T-cell (primary cell): ENCODE measurements at regions of chr20 and their contacts with region 1.

Region 1: DNA sequence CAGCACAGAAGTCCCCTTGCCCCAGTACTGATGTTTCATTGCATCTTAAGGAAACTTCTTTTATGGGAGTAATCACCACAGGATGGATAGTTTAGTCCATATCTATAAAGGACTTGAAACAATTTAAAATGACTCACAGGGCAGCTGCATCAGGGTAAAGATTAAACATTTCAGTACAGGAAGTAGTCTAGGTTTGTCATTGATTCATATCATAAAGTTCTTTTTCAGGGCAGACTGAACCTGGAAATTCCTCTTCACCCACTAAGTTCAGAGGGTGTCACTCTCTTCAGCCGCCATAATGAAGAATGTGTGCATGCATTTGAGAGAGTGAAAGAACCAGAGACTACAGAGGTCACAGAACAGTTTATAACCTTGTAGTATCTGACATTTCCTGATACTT is 296.3 kb upstream of the JAG1 start:
- DNase-seq: no peak
- ATAC-seq: no peak
- H3K4me3 ChIP-seq: no peak overlapping the region
- H3K4me3 Mint-ChIP-seq: no peak overlapping the region
- H3K27ac ChIP-seq: no peak overlapping the region
- H3K27ac Mint-ChIP-seq: no peak overlapping the region
- H3K4me1 ChIP-seq: no peaks in the 10 kb centered on the region
- H3K4me1 Mint-ChIP-seq: no peaks in the 10 kb centered on the region
- H3K27me3 ChIP-seq: peaks cover 0 to 3% of the 10 kb centered on the region in 2 experiments
- H3K27me3 Mint-ChIP-seq: no peaks in the 10 kb centered on the region

Region 2: DNA sequence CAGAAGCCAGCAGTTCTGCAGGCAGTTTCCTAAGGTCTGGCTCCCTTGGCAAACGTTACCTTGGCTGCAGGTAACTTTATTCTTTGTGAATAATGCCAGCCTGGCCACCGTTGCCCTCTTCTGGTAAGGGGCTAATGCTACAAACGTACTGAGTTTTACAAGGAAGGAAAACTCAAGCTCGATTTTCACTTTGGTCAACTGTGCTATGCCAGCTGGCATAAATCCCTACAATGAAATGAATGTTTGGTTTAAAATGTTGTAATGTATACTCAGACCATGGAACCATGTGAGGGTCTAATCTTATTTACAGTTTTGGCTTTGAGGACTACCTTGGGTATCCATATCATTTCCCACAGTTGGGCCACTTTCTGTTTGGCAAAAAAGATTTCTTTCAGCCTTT is 433.6 kb before region 1 on chr20:
- CTCF ChIA-PET with region 1: no interaction called
- POLR2A ChIA-PET with region 1: no interaction called
- DNase-seq: peak in 12 of 35 experiments; percentile 4 to 37 (median 9)
- ATAC-seq: peak in 1 of 4 experiments; percentile 51
- H3K4me3 ChIP-seq: no peak overlapping the region
- H3K4me3 Mint-ChIP-seq: no peak overlapping the region
- H3K27ac ChIP-seq: no peak overlapping the region
- H3K27ac Mint-ChIP-seq: no peak overlapping the region
- H3K4me1 ChIP-seq: peaks cover 4 to 9% of the 10 kb centered on the region in 2 experiments
- H3K4me1 Mint-ChIP-seq: peaks cover 14 to 29% (median 20%) of the 10 kb centered on the region in 3 donors
- H3K27me3 ChIP-seq: no peaks in the 10 kb centered on the region
- H3K27me3 Mint-ChIP-seq: no peaks in the 10 kb centered on the region

Region 3: DNA sequence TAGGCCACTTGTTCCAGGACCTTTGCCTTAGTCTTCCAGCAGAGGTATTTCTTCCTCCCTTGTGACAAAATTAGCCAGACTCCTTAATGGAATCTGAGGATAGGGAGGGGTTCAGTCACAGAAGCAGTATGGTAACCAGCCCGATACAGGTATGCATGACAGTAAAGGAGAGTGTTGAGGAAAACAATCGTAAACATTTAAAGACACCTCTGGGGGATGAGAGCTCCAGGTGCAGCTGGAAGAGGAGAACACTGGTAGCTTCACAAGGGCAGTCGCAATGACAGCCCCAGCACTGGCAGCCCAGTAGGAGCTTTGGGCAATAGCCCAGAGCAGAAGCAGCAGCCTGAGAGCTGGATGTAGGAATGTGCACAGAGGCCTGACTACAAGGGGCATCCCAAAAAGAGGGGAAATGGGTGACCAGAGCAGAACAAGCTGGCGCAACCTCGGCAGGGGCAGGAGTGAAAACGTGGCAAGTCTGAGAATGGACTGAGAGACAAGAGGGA is 48.6 kb after region 1 on chr20:
- CTCF ChIA-PET with region 1: no interaction called
- POLR2A ChIA-PET with region 1: no interaction called
- DNase-seq: no peak
- ATAC-seq: no peak
- H3K4me3 ChIP-seq: no peak overlapping the region
- H3K4me3 Mint-ChIP-seq: no peak overlapping the region
- H3K27ac ChIP-seq: no peak overlapping the region
- H3K27ac Mint-ChIP-seq: no peak overlapping the region
- H3K4me1 ChIP-seq: no peaks in the 10 kb centered on the region
- H3K4me1 Mint-ChIP-seq: no peaks in the 10 kb centered on the region
- H3K27me3 ChIP-seq: no peaks in the 10 kb centered on the region
- H3K27me3 Mint-ChIP-seq: no peaks in the 10 kb centered on the region

Region 4: DNA sequence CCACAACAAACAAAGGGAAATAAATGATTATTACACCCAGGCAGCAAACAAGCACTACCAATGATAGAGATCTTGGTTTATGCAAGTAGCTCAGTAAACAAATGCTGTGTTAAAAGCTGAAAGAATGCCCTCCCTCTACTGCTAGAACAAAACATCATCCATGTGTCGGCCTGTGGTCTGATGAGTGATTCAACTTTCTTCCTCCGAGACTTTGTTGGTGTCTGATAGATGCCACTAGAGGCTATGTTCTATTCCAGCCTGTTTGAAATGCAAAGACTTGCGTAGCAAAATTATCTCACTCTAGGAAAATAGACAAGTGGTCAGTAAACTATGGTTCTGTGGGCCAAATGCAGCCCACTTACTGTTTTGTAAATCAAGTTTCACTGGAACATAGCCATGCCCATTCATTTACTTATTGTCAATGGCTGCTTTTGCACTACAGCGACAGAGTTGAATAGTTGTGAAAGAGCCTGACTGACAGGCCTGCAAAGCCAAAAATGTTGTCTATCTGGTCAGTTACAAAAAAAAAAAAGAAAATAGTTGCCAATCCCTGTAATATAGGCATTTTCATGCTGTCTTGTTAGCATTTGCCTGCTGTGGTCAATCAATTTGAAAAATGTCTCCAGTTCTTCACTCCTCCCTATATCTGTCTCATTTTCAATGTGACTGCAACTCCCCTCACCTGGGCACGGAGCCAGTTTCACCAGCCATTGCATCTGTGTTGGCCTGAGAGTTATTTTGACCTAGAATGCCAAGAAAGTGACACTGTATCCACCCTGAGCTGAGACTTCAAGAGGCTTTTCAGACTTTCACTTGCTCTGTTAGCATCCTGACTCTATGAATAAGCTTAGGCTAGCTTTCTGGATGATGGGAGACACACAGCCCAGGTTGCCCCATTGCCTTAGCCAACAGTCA is 403.0 kb after region 1 on chr20:
- CTCF ChIA-PET with region 1: no interaction called
- POLR2A ChIA-PET with region 1: interaction called in 1 of 2 experiments, 10 read pairs
- DNase-seq: no peak
- ATAC-seq: no peak
- H3K4me3 ChIP-seq: no peak overlapping the region
- H3K4me3 Mint-ChIP-seq: no peak overlapping the region
- H3K27ac ChIP-seq: no peak overlapping the region
- H3K27ac Mint-ChIP-seq: no peak overlapping the region
- H3K4me1 ChIP-seq: no peaks in the 10 kb centered on the region
- H3K4me1 Mint-ChIP-seq: no peaks in the 10 kb centered on the region
- H3K27me3 ChIP-seq: no peaks in the 10 kb centered on the region
- H3K27me3 Mint-ChIP-seq: no peaks in the 10 kb centered on the region